ENCODE measurements at regions of chr12 and their contacts with region 1.

Region 1: GRCh38 chr12:43766291-43766690 is 7.5 kb downstream of the IRAK4 start:
- DNase-seq: no peak
- ATAC-seq: no peak
- H3K4me3 ChIP-seq: no peak overlapping the region
- H3K27ac ChIP-seq: no peak overlapping the region
- H3K4me1 ChIP-seq: no peaks in the 10 kb centered on the region
- H3K27me3 ChIP-seq: no peaks in the 10 kb centered on the region
- CTCF ChIP-seq: no peak

Region 2: DNA sequence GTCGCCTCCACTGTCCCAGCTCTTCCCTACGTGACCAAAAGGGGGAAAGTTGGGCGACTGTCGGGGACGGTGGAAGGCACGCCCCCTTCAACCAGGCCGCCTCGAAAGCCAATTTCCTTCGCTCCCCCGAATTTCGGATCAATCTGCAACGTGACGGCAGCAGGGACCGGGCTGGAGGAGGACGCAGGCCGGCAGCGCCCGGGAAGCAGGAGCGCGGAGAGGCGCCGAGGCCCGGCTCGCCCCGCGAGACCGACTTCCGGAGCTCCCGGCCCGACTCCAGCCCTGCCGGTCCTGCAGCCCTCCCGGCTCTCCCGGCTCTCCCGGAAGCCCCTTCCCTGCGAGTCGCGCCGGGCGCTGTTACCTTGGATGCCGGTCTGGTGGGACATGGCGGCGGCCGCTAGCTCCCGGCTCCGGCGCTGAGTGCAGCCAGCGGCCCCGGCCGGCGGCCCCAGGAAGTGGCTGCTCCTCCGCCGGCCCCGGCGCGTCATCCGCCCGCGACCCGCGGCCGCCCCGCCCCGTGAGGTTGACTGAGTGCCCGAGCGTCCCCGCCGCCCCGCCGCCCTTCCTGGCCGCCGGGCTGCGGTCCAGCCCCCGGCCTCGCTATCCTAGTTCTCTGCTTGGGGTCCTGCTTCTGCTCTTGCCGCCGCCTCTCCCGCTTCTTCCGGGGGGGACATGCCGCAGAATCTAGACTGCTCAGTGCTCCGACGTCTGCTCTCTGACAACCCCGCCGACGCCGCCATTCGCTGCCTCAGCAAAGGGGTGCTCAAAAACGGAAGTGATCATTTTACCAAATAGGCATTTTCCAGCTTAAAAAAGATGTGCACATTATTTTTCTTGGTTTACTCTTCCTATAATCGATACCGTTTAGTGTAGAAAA is 39.8 kb after region 1 on chr12 and contains the start of gene TWF1:
- CTCF ChIA-PET with region 1: no interaction called
- POLR2A ChIA-PET with region 1: interaction called, 10 read pairs
- in situ Hi-C with region 1: no loop called
- intact Hi-C with region 1: no loop called
- DNase-seq: no peak
- ATAC-seq: peak; percentile 99
- H3K4me3 ChIP-seq: peak within 1 kb of the TSS; percentile 95 to 98
- H3K27ac ChIP-seq: peak within 1 kb of the TSS; percentile 98
- H3K4me1 ChIP-seq: peaks cover 18% of the 10 kb centered on the region
- H3K27me3 ChIP-seq: no peaks in the 10 kb centered on the region
- CTCF ChIP-seq: peak; percentile 30; the same call in 1 of the 2 replicates
- total RNA-seq, gene TWF1: 103 TPM

Region 3: DNA sequence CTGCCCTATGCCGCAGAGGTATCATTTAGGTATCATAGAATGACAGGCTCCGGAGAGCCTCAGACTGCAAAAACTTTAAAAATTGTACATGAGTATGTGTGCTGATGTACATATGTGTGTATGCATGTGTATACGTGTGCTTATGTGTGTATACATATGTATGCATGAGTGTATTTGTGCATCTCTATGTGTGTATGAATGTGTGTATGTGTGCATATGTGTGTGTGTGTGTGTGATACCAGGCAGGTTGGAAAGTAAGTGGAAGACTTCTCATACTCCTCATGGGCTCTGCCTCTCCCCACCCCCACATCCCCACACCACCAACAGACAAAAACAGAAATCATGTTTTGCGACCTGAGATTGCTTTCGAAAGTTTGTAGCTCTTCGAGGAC is 69.0 kb after region 1 on chr12:
- CTCF ChIA-PET with region 1: no interaction called
- POLR2A ChIA-PET with region 1: interaction called, 15 read pairs
- in situ Hi-C with region 1: no loop called
- intact Hi-C with region 1: no loop called
- DNase-seq: no peak
- ATAC-seq: peak; percentile 43
- H3K4me3 ChIP-seq: peak overlapping the region; percentile 67 to 69
- H3K27ac ChIP-seq: peak overlapping the region; percentile 26; the same call in 1 of the 2 replicates
- H3K4me1 ChIP-seq: 0 out of 2 replicates have a peak, but pooled peaks cover 6% of the 10 kb centered on the region
- H3K27me3 ChIP-seq: no peaks in the 10 kb centered on the region
- CTCF ChIP-seq: no peak

Measured in Panc1 (cell line).